K562 (cell line): ENCODE measurements at regions of chr19 and their contacts with region 1.

Region 1: GRCh38 chr19:49676690-49677231 is 310 bp upstream of the PRMT1 start:
- DNase-seq: peak; percentile 90 to 100 (median 95)
- ATAC-seq: peak; percentile 80
- H3K4me3 ChIP-seq: peak overlapping the region; percentile 85
- H3K27ac ChIP-seq: peak overlapping the region; percentile 97
- H3K4me1 ChIP-seq: peaks cover 33 to 49% of the 10 kb centered on the region in 2 experiments
- H3K27me3 ChIP-seq: no peaks in the 10 kb centered on the region
- CTCF ChIP-seq: no peak
- EP300 ChIP-seq: no peak
- POLR2A ChIP-seq: no peak
- RAD21 ChIP-seq: no peak

Region 2: GRCh38 chr19:49127674-49128544 is 548.9 kb before region 1 on chr19:
- CTCF ChIA-PET with region 1: no interaction called
- POLR2A ChIA-PET with region 1: no interaction called
- in situ Hi-C with region 1: no loop called
- intact Hi-C with region 1: no loop called
- DNase-seq: peak; percentile 95 to 97 (median 96)
- ATAC-seq: peak; percentile 97
- H3K4me3 ChIP-seq: peak overlapping the region; percentile 55
- H3K27ac ChIP-seq: peak overlapping the region; percentile 74
- H3K4me1 ChIP-seq: peaks cover 19 to 48% of the 10 kb centered on the region in 2 experiments
- H3K27me3 ChIP-seq: no peaks in the 10 kb centered on the region
- CTCF ChIP-seq: peak; percentile 18 to 58 (median 50); a peak in 4 of 6 replicates
- EP300 ChIP-seq: no peak
- POLR2A ChIP-seq: peak; percentile 36; the same call in 1 of the 2 replicates
- RAD21 ChIP-seq: peak in 1 of 2 experiments; percentile 43; a peak in 2 of 4 replicates

Region 3: DNA sequence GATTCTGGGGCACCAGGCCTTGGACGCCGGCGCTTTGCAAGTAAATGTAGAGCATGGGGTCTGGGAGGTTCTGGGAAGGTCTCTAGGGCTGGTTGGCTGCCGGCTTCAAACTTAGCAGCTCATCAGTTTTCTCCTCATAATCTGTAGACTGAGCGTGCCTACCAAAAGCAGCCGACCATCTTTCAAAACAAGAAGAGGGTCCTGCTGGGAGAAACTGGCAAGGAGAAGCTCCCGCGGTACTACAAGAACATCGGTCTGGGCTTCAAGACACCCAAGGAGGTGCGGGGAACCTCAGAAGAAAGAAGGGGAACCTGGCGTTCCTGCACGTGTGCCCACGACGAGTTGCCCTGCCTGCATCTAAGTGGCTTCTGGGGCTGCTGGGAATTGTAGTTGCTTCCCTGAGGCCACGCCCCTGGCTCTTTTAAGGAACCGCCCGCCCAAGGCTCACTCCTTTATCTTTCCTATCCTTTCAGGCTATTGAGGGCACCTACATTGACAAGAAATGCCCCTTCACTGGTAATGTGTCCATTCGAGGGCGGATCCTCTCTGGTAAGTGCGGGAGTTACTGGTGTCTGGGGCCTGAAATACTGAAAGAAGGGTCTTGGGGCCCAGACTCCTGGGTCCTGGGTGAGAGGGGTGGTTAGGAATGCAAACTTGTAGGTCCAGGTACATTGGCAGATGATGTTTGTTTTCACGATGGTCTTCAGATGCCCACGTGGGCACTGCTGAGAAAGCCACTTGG is 179.5 kb before region 1 on chr19:
- CTCF ChIA-PET with region 1: interaction called, 3 read pairs
- POLR2A ChIA-PET with region 1: interaction called, 20 read pairs
- in situ Hi-C with region 1: no loop called
- intact Hi-C with region 1: no loop called
- DNase-seq: peak; percentile 47 to 89 (median 63)
- ATAC-seq: peak; percentile 37
- H3K4me3 ChIP-seq: peak overlapping the region; percentile 89
- H3K27ac ChIP-seq: peak overlapping the region; percentile 94
- H3K4me1 ChIP-seq: peaks cover 33 to 44% of the 10 kb centered on the region in 2 experiments; a peak in 4 of 5 replicates
- H3K27me3 ChIP-seq: no peaks in the 10 kb centered on the region
- CTCF ChIP-seq: no peak
- EP300 ChIP-seq: no peak
- POLR2A ChIP-seq: peak; percentile 68
- RAD21 ChIP-seq: no peak

Region 4: DNA sequence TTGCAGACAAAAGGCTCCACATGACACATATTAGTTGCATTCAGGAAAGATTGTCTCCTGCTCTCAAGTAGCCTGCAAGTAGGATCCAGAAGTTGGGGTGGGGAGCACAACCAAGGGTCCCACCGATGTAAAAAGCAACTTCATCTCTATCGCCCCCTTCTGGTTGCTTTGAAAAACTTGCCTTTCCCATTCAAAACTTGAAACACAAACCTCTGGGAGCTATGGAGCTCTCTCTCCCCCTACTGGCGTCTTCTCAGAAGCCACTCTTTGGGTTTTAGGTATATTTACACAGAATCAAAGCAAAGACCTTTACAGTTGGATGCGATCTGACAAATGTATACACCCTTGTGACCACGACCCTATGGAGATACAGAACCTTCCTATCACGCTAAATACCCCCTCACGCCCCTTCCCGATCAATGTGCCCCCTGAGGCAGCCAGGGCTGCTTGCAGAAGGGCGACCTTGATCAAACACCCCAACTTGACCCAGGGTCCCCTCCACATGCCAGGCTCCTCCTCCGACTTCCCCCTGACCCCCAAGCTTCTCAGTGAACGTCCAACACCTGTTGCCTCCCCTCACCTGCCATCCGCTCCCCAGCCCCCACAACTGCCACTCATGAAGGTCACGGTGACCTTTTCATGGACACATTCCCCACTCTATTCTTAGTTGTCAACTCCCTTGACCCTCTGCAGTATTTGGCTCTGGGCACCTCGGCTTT is 106.5 kb before region 1 on chr19:
- CTCF ChIA-PET with region 1: interaction called, 3 read pairs
- POLR2A ChIA-PET with region 1: interaction called, 5 read pairs
- in situ Hi-C with region 1: no loop called
- intact Hi-C with region 1: loop called (anchors 5 kb)
- DNase-seq: peak; percentile 81 to 93 (median 82)
- ATAC-seq: peak; percentile 89
- H3K4me3 ChIP-seq: no peak overlapping the region
- H3K27ac ChIP-seq: peak overlapping the region; percentile 53
- H3K4me1 ChIP-seq: peaks cover 17 to 21% of the 10 kb centered on the region in 2 experiments
- H3K27me3 ChIP-seq: no peaks in the 10 kb centered on the region
- CTCF ChIP-seq: peak; percentile 98 to 100 (median 99)
- EP300 ChIP-seq: no peak
- POLR2A ChIP-seq: no peak
- RAD21 ChIP-seq: peak; percentile 89 to 90

Region 5: DNA sequence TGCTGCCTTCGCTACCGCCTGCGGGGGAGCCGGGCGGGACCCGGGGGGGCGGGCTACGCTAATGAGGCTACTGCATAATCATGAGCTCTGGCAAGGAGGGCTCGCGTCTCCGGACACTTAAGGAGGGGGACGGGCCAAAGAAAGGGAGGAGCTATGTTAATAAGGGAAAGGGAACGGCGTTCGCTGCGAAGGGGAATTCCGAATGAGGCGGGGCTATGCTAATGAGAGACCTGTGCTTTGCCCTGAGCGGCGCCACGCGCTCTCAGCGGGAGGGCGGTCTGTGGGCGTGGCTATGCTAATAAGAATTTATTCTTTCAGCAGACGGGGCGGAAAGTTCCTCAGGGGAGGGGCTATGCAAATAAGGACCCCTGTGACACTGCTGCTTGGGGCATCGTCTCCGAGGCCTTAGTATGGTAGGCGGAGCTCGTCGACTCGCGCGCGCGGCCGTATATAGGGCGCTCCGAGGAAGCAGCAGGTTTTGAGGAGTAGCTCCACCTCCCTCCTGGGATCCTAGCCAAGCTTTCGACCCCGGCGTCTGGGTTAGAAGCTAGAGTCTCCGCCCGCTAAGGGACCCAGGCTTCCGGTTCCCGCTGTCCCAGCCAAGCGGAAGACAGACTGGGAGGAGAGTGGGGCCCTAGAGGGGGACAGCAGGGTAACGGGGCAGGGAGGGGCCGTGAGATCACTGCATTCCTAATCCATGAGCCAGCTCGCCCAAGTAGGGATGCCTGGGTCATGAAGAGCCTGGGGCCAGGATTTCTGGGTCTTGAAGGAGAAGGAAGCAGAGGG is 36.5 kb before region 1 on chr19 and contains the start of gene RRAS:
- CTCF ChIA-PET with region 1: no interaction called
- POLR2A ChIA-PET with region 1: interaction called, 23 read pairs
- in situ Hi-C with region 1: no loop called
- intact Hi-C with region 1: loop called (anchors 2 kb)
- DNase-seq: peak; percentile 95 to 100 (median 96)
- ATAC-seq: peak; percentile 83
- H3K4me3 ChIP-seq: peak within 1 kb of the TSS; percentile 97
- H3K27ac ChIP-seq: peak within 1 kb of the TSS; percentile 97
- H3K4me1 ChIP-seq: peaks cover 27 to 58% of the 10 kb centered on the region in 2 experiments
- H3K27me3 ChIP-seq: no peaks in the 10 kb centered on the region
- CTCF ChIP-seq: 0 out of 6 replicates have a peak, but pooled peaks of 1 of the 3 experiments have one; percentile 2
- EP300 ChIP-seq: peak; percentile 45; the same call in 1 of the 2 replicates
- POLR2A ChIP-seq: peak; percentile 92
- RAD21 ChIP-seq: no peak
- polyA plus RNA-seq, gene RRAS: 0.70 to 1.3 TPM

Region 6: DNA sequence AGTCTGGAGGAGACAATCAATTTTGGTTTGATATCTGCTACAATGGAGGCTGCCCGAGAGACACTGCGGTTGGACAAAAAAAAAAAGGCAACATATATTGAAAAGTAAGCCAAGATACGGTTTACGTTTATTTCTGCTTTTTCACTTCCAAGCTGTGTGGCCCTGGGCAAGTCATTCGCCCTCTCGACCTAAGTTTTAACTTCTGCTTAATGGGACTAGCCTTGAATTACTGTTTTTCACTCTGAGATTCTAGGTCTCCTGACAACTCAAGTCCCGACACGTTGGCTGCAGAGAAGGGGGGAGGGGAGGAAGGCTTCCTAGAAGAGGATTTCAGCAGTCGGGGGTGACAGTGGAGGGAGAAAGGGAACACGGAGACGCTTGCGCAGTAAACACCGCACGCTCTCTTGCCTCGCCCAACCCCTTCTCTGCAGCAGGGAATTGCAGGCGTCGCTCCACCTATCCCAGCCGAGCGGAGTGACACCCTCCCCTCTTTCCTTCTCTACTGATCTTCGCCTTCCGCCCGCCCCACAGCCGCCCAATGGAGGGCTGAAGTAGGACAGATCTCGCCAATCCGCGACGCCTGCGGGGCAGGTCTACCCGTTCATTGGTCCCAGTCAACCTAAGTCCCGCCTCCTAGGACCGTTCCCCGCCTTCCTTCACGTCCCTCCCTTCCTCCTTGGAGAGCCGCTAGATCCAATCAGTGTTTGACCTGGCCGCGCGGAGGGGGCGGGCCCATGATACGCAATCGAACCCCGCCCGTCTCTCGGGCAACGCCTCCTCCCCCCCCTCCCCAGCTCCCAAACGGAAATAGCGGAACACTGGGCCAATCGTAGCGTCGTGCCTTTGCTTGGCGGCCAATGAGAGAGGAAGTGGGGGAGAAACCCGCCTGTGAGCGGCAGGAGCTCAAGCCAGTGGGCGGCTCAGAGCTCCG is 89.5 kb after region 1 on chr19:
- CTCF ChIA-PET with region 1: interaction called, 5 read pairs
- POLR2A ChIA-PET with region 1: interaction called, 3 read pairs
- in situ Hi-C with region 1: no loop called
- intact Hi-C with region 1: loop called (anchors 5 kb)
- DNase-seq: peak; percentile 99 to 100 (median 99)
- ATAC-seq: peak; percentile 91
- H3K4me3 ChIP-seq: peak overlapping the region; percentile 32
- H3K27ac ChIP-seq: peak overlapping the region; percentile 92
- H3K4me1 ChIP-seq: peaks cover 43 to 51% of the 10 kb centered on the region in 2 experiments
- H3K27me3 ChIP-seq: no peaks in the 10 kb centered on the region
- CTCF ChIP-seq: no peak
- EP300 ChIP-seq: 0 out of 2 replicates have a peak, but pooled peaks have one; percentile 35
- POLR2A ChIP-seq: peak; percentile 89
- RAD21 ChIP-seq: peak in 1 of 2 experiments; percentile 35; a peak in 2 of 4 replicates

Region 7: GRCh38 chr19:49973987-49974386 is 297.2 kb after region 1 on chr19:
- CTCF ChIA-PET with region 1: no interaction called
- POLR2A ChIA-PET with region 1: no interaction called
- in situ Hi-C with region 1: no loop called
- intact Hi-C with region 1: no loop called
- DNase-seq: no peak
- ATAC-seq: no peak
- H3K4me3 ChIP-seq: no peak overlapping the region
- H3K27ac ChIP-seq: no peak overlapping the region
- H3K4me1 ChIP-seq: peaks cover 0 to 20% of the 10 kb centered on the region in 2 experiments; a peak in 3 of 5 replicates
- H3K27me3 ChIP-seq: peaks cover 4% of the 10 kb centered on the region in 2 experiments; a peak in 3 of 5 replicates
- CTCF ChIP-seq: no peak
- EP300 ChIP-seq: no peak
- POLR2A ChIP-seq: no peak
- RAD21 ChIP-seq: no peak